CD8-positive, alpha-beta T cell (primary cell): ENCODE measurements at regions of chr3 and their contacts with region 1.

Region 1: GRCh38 chr3:56801662-56802377 is at the start of gene ARHGEF3:
- DNase-seq: peak; percentile 82 to 96 (median 87)
- ATAC-seq: peak; percentile 82
- H3K4me3 ChIP-seq: peak within 1 kb of the TSS; percentile 98 to 99
- H3K4me3 Mint-ChIP-seq: peak within 1 kb of the TSS; percentile 95
- H3K27ac ChIP-seq: peak within 1 kb of the TSS; percentile 71 to 85
- H3K27ac Mint-ChIP-seq: peak within 1 kb of the TSS; percentile 93
- H3K4me1 ChIP-seq: peaks cover 23% of the 10 kb centered on the region
- H3K4me1 Mint-ChIP-seq: peaks cover 37% of the 10 kb centered on the region
- H3K27me3 ChIP-seq: no peaks in the 10 kb centered on the region
- H3K27me3 Mint-ChIP-seq: no peaks in the 10 kb centered on the region
- CTCF ChIP-seq: peak; percentile 56
- total RNA-seq, gene ARHGEF3: 38.8 to 39.9 TPM

Region 2: DNA sequence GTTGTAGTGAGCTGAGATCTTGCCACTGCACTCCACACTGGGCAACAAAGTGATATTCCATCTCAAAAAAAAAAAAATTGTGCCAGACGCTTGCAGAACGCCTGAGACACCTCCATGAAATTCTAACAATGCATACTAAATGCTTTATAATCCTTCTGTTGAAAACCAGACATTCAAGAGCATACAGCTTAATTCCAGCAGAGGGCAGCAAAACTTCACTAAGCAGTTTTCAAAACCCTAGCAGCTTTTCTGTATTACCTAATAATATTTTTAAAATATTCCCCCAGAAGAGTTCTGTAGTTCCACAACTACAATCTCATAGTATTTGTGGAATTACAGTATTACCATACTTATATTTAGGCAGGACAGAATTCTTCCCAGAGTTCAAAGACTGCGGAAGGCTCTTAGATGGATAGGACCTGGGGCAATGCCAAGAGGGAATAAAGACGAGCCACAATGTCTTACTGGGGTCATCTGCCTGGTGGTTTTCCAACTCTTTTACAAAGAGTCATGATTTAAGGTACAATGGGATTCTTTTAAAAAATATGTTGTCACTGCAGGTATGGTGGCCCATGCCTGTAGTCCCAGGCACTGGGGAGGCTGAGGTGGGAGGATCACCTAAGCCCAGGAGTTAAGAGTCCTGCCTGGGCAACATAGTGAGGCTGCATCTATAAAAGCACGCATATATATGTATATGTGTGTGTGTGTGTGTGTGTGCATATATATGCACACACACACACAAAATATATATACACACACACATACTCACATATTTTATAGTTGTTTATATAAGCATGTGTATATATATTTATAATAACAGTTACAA is 99.1 kb before region 1 on chr3:
- CTCF ChIA-PET with region 1: interaction called, 222 read pairs
- POLR2A ChIA-PET with region 1: interaction called, 30 read pairs
- intact Hi-C with region 1: loop called (anchors 1 kb)
- DNase-seq: peak in 7 of 9 experiments; percentile 37 to 86 (median 60)
- ATAC-seq: peak; percentile 79
- H3K4me3 ChIP-seq: no peak overlapping the region
- H3K4me3 Mint-ChIP-seq: no peak overlapping the region
- H3K27ac ChIP-seq: no peak overlapping the region
- H3K27ac Mint-ChIP-seq: no peak overlapping the region
- H3K4me1 ChIP-seq: peaks cover 20% of the 10 kb centered on the region
- H3K4me1 Mint-ChIP-seq: peaks cover 22% of the 10 kb centered on the region
- H3K27me3 ChIP-seq: no peaks in the 10 kb centered on the region
- H3K27me3 Mint-ChIP-seq: no peaks in the 10 kb centered on the region
- CTCF ChIP-seq: peak; percentile 86

Region 3: DNA sequence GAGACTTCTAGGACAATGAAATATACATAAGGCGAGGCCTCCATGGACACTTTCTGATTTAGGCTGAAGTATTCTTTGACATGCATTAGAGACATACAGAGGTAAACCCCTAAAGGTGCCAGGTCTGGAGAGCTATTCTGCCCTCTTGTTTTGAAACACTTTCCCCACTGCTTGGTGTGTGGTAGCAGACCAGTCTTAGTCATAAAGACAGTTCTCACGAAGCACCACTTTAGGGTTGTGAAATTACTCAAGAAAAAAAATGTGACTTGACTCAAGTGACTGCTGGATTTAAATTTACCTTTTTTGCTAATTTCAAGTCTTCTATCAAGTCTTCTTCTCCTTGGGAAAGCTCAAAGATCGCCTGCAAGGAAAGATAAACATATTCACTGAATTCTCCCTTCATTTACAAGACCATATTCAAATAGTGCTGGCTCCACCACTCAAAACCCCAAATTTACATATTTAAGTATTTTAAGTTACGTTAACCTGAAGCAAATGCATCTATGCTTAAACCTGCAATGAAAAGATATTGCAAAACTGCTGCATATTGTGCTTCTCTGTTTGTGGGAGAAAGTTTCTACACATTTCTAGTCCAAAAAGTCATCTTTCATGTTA is 48.5 kb before region 1 on chr3:
- CTCF ChIA-PET with region 1: interaction called, 146 read pairs
- POLR2A ChIA-PET with region 1: interaction called, 65 read pairs
- intact Hi-C with region 1: loop called (anchors 1 kb)
- DNase-seq: peak in 5 of 9 experiments; percentile 22 to 56 (median 45)
- ATAC-seq: peak; percentile 27
- H3K4me3 ChIP-seq: no peak overlapping the region
- H3K4me3 Mint-ChIP-seq: peak overlapping the region; percentile 47
- H3K27ac ChIP-seq: peak overlapping the region; percentile 62 to 79
- H3K27ac Mint-ChIP-seq: peak overlapping the region; percentile 100
- H3K4me1 ChIP-seq: peaks cover 52% of the 10 kb centered on the region
- H3K4me1 Mint-ChIP-seq: peaks cover 66% of the 10 kb centered on the region
- H3K27me3 ChIP-seq: no peaks in the 10 kb centered on the region
- H3K27me3 Mint-ChIP-seq: no peaks in the 10 kb centered on the region
- CTCF ChIP-seq: no peak

Region 4: GRCh38 chr3:56783644-56784447 is 18.0 kb before region 1 on chr3:
- CTCF ChIA-PET with region 1: interaction called, 117 read pairs
- POLR2A ChIA-PET with region 1: interaction called, 182 read pairs
- intact Hi-C with region 1: loop called (anchors 1 kb)
- DNase-seq: peak; percentile 46 to 91 (median 75)
- ATAC-seq: peak; percentile 79
- H3K4me3 ChIP-seq: peak overlapping the region; percentile 10 to 24
- H3K4me3 Mint-ChIP-seq: peak overlapping the region; percentile 67
- H3K27ac ChIP-seq: peak overlapping the region; percentile 51 to 80
- H3K27ac Mint-ChIP-seq: peak overlapping the region; percentile 88
- H3K4me1 ChIP-seq: peaks cover 98% of the 10 kb centered on the region
- H3K4me1 Mint-ChIP-seq: peaks cover 97% of the 10 kb centered on the region
- H3K27me3 ChIP-seq: no peaks in the 10 kb centered on the region
- H3K27me3 Mint-ChIP-seq: no peaks in the 10 kb centered on the region
- CTCF ChIP-seq: no peak

Region 5: GRCh38 chr3:56915966-56916586 is 114.3 kb after region 1 on chr3:
- CTCF ChIA-PET with region 1: interaction called, 37 read pairs
- POLR2A ChIA-PET with region 1: interaction called, 44 read pairs
- intact Hi-C with region 1: loop called (anchors 2 kb)
- DNase-seq: peak; percentile 44 to 88 (median 75)
- ATAC-seq: peak; percentile 89
- H3K4me3 ChIP-seq: peak overlapping the region; percentile 75 to 78
- H3K4me3 Mint-ChIP-seq: peak overlapping the region; percentile 92
- H3K27ac ChIP-seq: peak overlapping the region; percentile 72 to 88
- H3K27ac Mint-ChIP-seq: peak overlapping the region; percentile 91
- H3K4me1 ChIP-seq: peaks cover 57% of the 10 kb centered on the region
- H3K4me1 Mint-ChIP-seq: peaks cover 77% of the 10 kb centered on the region
- H3K27me3 ChIP-seq: no peaks in the 10 kb centered on the region
- H3K27me3 Mint-ChIP-seq: no peaks in the 10 kb centered on the region
- CTCF ChIP-seq: no peak

Region 6: GRCh38 chr3:56997675-56998074 is 195.9 kb after region 1 on chr3:
- CTCF ChIA-PET with region 1: interaction called, 202 read pairs
- POLR2A ChIA-PET with region 1: no interaction called
- intact Hi-C with region 1: no loop called
- DNase-seq: no peak
- ATAC-seq: no peak
- H3K4me3 ChIP-seq: no peak overlapping the region
- H3K4me3 Mint-ChIP-seq: no peak overlapping the region
- H3K27ac ChIP-seq: no peak overlapping the region
- H3K27ac Mint-ChIP-seq: no peak overlapping the region
- H3K4me1 ChIP-seq: no peaks in the 10 kb centered on the region
- H3K4me1 Mint-ChIP-seq: peaks cover 2% of the 10 kb centered on the region
- H3K27me3 ChIP-seq: no peaks in the 10 kb centered on the region
- H3K27me3 Mint-ChIP-seq: peaks cover 2% of the 10 kb centered on the region
- CTCF ChIP-seq: no peak

Region 7: GRCh38 chr3:57446318-57446841 is 644.6 kb after region 1 on chr3:
- CTCF ChIA-PET with region 1: no interaction called
- POLR2A ChIA-PET with region 1: no interaction called
- intact Hi-C with region 1: no loop called
- DNase-seq: no peak
- ATAC-seq: no peak
- H3K4me3 ChIP-seq: no peak overlapping the region
- H3K4me3 Mint-ChIP-seq: no peak overlapping the region
- H3K27ac ChIP-seq: no peak overlapping the region
- H3K27ac Mint-ChIP-seq: no peak overlapping the region
- H3K4me1 ChIP-seq: no peaks in the 10 kb centered on the region
- H3K4me1 Mint-ChIP-seq: no peaks in the 10 kb centered on the region
- H3K27me3 ChIP-seq: no peaks in the 10 kb centered on the region
- H3K27me3 Mint-ChIP-seq: no peaks in the 10 kb centered on the region
- CTCF ChIP-seq: no peak